Right ventricle myocardium superior (tissue), 1 donor: ENCODE measurements at regions of chr21 and their contacts with region 1.

Region 1: GRCh38 chr21:28069450-28069923 is 923.2 kb downstream of the LTN1 start:
- DNase-seq: no peak
- ATAC-seq: peak; percentile 26

Region 2: GRCh38 chr21:28336314-28336713 is 266.8 kb after region 1 on chr21:
- intact Hi-C with region 1: loop called (anchors 10 kb)
- DNase-seq: no peak
- ATAC-seq: peak; percentile 75